ENCODE measurements at regions of chr1 and their contacts with region 1.

Region 1: DNA sequence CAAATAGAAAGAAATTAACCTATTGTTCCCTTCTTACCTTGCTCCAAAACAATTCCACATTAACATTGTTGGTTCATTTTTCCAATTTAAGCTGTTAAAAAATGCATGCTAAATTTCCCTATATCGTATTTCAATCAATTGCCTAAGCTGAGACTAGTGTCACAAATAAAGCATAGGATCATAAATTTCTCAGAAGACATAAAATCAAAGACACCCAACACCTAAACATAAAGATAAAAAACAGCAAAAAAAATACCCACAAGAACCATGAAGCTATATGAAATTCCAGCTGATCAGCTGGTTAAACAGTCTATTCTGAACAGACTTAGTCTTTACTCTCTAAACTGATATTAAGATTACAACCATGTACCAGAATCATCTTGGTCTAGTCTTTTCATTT is 32.3 kb downstream of the ACBD6 start:
- DNase-seq: no peak
- H3K4me3 ChIP-seq: no peak overlapping the region
- H3K27ac ChIP-seq: no peak overlapping the region
- H3K4me1 ChIP-seq: no peaks in the 10 kb centered on the region
- H3K27me3 ChIP-seq: no peaks in the 10 kb centered on the region

Region 2: DNA sequence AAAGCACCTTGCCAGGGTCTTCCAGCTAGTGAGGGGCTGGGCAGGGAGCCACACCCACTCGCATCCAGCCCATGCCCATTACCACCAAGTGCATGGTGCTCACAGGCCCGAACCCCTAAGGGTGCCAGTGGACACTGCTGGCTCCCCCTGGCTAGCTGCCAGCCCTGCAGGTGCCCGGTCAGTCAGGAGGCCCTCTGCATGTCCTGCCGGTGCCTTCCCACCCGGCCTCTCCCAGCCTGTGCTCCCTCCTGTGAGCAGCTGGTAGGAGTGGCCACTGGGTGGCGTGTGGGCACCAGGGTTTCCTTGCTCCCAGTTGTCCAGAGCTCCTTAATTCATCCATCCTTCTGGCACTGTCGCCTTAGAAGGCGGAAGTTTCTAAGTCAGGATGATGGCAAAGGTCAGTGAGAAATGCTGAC is 281.9 kb before region 1 on chr1:
- in situ Hi-C with region 1: loop called (anchors 10 kb)
- DNase-seq: peak; percentile 64
- H3K4me3 ChIP-seq: no peak overlapping the region
- H3K27ac ChIP-seq: no peak overlapping the region
- H3K4me1 ChIP-seq: no peaks in the 10 kb centered on the region
- H3K27me3 ChIP-seq: no peaks in the 10 kb centered on the region

Region 3: DNA sequence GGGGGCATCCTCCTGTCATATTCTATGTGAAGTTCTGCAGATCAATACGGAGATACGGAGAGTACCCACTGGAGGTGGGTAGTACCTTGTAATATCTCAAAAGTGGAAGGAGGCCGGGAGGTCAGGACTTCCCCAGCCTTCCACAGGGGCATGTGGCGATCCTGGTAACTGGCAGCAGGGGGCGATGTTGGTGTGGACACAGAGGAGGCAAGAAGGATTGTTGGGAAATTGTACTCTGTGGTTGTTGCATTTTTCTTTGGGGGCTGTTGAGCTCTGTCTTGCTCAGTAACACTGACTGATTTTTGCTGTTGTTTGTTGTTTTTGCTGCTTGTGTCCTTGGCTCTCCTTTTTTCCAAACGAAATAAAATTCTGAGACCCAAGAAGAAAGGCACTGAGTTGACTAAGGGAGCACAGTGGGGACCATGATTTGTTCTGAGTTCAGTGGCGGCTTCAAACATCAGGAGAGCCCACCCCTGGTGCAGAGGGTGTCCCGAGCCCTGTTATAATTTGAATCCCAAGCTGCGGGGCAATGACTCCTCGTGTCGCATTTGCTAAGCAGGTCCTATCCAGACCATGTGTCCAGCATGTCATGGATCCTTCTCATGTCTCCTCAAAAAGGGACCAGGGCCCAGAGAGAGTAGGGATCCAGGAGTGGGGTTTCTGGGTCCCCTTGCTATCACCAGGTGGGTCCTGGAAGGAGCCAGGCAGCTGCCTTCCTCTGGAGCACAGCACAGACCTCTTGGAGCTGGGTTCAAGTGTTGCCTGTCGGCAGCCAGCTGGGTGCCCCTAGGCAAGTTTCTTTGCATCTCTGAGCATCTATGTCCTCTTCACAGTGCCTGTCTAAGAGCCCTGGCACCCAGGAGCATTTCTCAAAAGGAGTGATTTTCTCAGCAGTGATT is 217.1 kb before region 1 on chr1:
- in situ Hi-C with region 1: loop called (anchors 10 kb)
- DNase-seq: peak; percentile 73
- H3K4me3 ChIP-seq: no peak overlapping the region
- H3K27ac ChIP-seq: no peak overlapping the region
- H3K4me1 ChIP-seq: no peaks in the 10 kb centered on the region
- H3K27me3 ChIP-seq: no peaks in the 10 kb centered on the region